Heart left ventricle (tissue), 16 donors: ENCODE measurements at regions of chr5 and their contacts with region 1.

Region 1: DNA sequence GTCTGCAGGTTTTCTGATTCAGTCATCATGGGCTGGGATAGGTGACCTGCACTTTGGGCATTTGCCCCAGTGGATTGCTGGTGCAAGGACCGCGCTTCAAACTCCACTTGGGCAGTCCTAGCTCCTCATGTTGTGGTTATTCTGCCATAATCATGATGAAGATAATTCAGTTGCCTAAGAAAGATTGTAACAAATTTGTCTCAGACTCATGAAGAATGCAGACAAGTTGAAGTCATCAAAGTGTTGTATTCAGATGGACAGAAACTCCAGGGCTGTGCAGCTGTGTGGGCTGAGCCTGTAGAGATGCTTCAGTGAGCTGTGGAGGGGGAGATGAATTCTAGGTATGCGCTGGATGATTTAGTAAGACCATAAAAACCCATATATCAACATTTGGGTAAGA is 38.5 kb downstream of the TARS1 start:
- DNase-seq: no peak
- ATAC-seq: no peak
- H3K4me3 ChIP-seq: no peak overlapping the region
- H3K27ac ChIP-seq: no peak overlapping the region
- H3K4me1 ChIP-seq: no peaks in the 10 kb centered on the region
- H3K27me3 ChIP-seq: no peaks in the 10 kb centered on the region
- CTCF ChIP-seq: no peak
- POLR2A ChIP-seq: no peak

Region 2: DNA sequence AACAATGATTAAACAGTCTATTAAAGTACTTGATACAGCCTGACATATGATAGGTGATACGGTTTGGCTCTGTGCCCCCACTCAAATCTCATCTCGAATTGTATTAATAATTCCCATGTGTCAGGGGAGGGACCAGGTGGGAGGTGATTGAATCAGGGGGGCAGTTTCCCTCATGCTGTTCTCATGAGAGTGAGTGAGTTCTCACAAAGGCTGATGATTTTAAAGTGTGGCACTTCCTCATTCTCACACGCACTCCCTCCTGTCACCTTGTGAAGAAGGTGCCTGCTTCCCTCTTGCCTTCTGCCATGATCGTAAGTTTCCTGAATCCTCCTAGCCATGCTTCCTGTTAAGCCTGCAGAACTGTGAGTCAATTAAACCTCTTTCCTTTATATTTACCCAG is 78.6 kb before region 1 on chr5:
- intact Hi-C with region 1: no loop called
- DNase-seq: no peak
- ATAC-seq: no peak
- H3K4me3 ChIP-seq: no peak overlapping the region
- H3K27ac ChIP-seq: no peak overlapping the region
- H3K4me1 ChIP-seq: no peaks in the 10 kb centered on the region
- H3K27me3 ChIP-seq: no peaks in the 10 kb centered on the region
- CTCF ChIP-seq: no peak
- POLR2A ChIP-seq: no peak

Region 3: DNA sequence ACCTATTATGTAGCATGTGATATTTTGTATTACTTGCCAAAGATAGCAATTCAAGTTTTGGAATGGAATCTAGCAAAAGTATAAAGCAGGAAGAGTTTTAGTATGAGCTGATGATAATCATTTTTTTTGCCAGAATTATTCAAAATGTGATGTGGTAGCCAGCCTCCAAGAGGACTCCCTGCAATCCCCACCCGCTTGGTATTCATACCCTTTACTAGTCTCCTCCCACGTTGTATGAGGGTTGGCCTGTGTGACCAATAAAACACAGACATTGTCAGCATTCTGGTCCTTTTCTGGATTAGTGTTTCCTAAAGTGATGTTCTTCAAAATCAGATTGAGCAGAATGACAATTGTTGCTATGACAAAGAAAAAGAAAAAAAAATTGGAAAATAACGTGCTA is 25.3 kb after region 1 on chr5:
- intact Hi-C with region 1: loop called in 1 of 10 experiments (anchors 2 kb)
- DNase-seq: no peak
- ATAC-seq: no peak
- H3K4me3 ChIP-seq: no peak overlapping the region
- H3K27ac ChIP-seq: no peak overlapping the region
- H3K4me1 ChIP-seq: no peaks in the 10 kb centered on the region
- H3K27me3 ChIP-seq: no peaks in the 10 kb centered on the region
- CTCF ChIP-seq: no peak
- POLR2A ChIP-seq: no peak